ENCODE measurements at regions of chr10 and their contacts with region 1.

Region 1: DNA sequence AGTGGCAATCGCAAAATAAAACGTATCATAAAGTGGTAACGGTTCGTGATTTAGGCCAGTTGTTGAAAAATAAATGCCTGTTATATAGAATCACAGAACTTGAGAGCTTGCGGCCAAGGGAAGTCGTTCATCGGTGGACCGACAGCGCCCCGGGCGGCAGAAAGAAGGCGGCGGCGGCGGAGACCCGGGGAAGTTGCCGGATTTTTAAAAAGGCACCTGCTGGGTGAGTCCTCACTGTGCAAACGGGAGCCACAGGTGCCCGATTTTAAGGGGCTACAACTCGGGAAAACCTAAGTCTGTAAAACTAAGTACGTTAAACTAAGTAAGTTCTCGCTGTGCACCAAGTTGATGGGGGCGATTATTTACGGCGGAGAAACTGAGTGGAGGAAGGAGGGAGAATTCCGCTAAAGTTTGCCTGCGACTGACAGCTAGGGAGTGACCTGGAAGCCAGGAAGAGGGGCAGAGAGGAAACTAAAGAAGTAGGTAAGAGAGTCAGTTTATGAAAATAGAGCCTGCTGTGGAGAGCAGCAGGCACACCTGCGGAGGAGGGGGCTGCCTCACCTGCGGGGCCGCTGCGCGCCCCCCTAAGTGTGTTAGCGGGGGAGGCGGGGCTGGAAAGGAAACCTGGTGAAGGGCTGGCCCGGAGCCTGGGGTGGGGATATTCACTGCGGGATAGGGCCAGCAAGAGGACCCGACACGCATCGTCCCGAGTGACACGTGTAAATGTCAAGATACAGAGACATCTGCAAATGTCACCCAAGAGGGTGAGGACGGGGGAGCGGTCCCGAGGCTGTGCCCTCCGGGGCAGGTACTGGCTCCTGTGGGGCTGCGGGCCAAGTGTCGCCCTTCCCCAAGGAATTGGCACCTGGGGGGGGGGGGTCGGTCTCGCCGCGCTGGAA is 1.0 kb downstream of the ADAM12 start:
- DNase-seq: peak in 1 of 2 experiments; percentile 85
- H3K4me3 ChIP-seq: peak overlapping the region; percentile 45 to 68 (median 61)
- H3K27ac ChIP-seq: no peak overlapping the region
- H3K4me1 ChIP-seq: peaks cover 0 to 2% (median 0%) of the 10 kb centered on the region in 4 experiments; a peak in 4 of 7 replicates
- H3K27me3 ChIP-seq: peaks cover 10 to 28% (median 27%) of the 10 kb centered on the region in 4 experiments
- CTCF ChIP-seq: peak; percentile 69 to 85 (median 72)
- EP300 ChIP-seq: no peak
- POLR2A ChIP-seq: no peak
- RAD21 ChIP-seq: peak; percentile 81 to 89

Region 2: DNA sequence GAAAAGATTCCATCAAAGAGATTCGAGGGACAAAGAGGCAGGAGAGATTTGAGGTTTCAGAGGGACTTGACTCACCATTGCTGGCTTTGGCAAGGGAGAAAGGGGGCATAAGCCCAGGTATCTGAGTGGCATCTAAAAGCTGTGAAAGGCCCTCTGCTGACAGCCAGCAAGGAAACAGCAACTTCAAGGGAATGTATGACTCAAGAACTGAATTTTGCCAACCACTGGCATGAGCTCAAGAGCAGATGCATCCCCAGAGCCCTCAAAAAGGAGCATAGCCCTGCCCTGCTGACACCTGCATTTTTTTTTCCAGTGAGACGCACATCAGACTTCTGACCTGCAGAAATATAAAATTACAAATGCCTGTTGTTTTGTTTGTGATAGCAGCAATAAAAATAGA is 20.6 kb after region 1 on chr10:
- CTCF ChIA-PET with region 1: interaction called, 10 read pairs
- POLR2A ChIA-PET with region 1: no interaction called
- DNase-seq: no peak
- H3K4me3 ChIP-seq: no peak overlapping the region
- H3K27ac ChIP-seq: no peak overlapping the region
- H3K4me1 ChIP-seq: no peaks in the 10 kb centered on the region
- H3K27me3 ChIP-seq: no peaks in the 10 kb centered on the region
- CTCF ChIP-seq: no peak
- EP300 ChIP-seq: no peak
- POLR2A ChIP-seq: no peak
- RAD21 ChIP-seq: no peak